ENCODE measurements at regions of chrX and their contacts with region 1.

Region 1: GRCh38 chrX:124369722-124370121 is 23.4 kb downstream of the SH2D1A start:
- DNase-seq: no peak
- H3K4me3 ChIP-seq: no peak overlapping the region
- H3K27ac ChIP-seq: no peak overlapping the region
- H3K4me1 ChIP-seq: peaks cover 3% of the 10 kb centered on the region
- H3K27me3 ChIP-seq: no peaks in the 10 kb centered on the region
- CTCF ChIP-seq: no peak

Region 2: DNA sequence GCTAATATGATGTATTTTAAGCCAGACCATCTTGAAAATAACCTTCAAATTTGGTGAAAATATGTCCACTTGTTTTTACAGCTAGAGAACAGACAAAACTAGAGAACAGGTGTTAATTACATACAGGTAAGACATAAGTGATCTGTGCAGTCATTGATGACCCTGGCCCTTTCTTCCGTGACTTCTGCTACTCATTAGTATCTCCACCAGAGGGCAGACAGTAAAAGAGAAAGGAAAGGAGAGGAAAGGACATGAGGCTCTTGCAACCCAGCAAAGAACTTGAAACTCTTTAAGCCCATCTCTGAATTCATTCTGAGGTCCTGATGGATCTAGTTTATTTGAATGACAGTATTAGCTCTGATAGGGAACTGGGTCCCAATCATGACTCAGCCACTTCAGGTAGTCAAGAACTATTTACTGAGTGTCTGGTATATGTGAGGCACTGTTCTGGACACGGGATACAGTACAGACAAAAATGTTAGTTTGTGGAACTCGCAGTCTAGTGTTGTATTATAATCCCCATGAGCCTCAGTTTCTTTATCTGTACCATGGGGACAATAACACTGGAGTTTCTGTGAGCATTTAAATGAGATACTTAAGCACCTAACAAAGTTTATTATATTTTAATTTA is 158.3 kb before region 1 on chrX:
- CTCF ChIA-PET with region 1: no interaction called
- dilution Hi-C with region 1: no loop called
- in situ Hi-C with region 1: no loop called
- intact Hi-C with region 1: loop called (anchors 5 kb)
- DNase-seq: peak; percentile 44
- H3K4me3 ChIP-seq: no peak overlapping the region
- H3K27ac ChIP-seq: no peak overlapping the region
- H3K4me1 ChIP-seq: peaks cover 4% of the 10 kb centered on the region
- H3K27me3 ChIP-seq: no peaks in the 10 kb centered on the region
- CTCF ChIP-seq: peak; percentile 53 to 72